ENCODE measurements at regions of chr12 and their contacts with region 1.

Region 1: GRCh38 chr12:47014474-47014873 is 64.9 kb upstream of the PCED1B start:
- DNase-seq: no peak
- H3K4me3 ChIP-seq: no peak overlapping the region
- H3K27ac ChIP-seq: no peak overlapping the region
- H3K4me1 ChIP-seq: no peaks in the 10 kb centered on the region
- H3K27me3 ChIP-seq: no peaks in the 10 kb centered on the region
- CTCF ChIP-seq: no peak
- EP300 ChIP-seq: no peak
- POLR2A ChIP-seq: no peak

Region 2: GRCh38 chr12:46071769-46072624 is 942.5 kb before region 1 on chr12:
- intact Hi-C with region 1: loop called (anchors 10 kb)
- DNase-seq: no peak
- H3K4me3 ChIP-seq: peak overlapping the region in 1 of 4 donors; percentile 6
- H3K27ac ChIP-seq: no peak overlapping the region
- H3K4me1 ChIP-seq: peaks cover 8 to 11% (median 10%) of the 10 kb centered on the region in 4 donors
- H3K27me3 ChIP-seq: no peaks in the 10 kb centered on the region
- CTCF ChIP-seq: peak; percentile 78 to 91 (median 90)
- EP300 ChIP-seq: no peak
- POLR2A ChIP-seq: no peak

Region 3: GRCh38 chr12:46499901-46500300 is 514.6 kb before region 1 on chr12:
- intact Hi-C with region 1: no loop called
- DNase-seq: no peak
- H3K4me3 ChIP-seq: no peak overlapping the region
- H3K27ac ChIP-seq: no peak overlapping the region
- H3K4me1 ChIP-seq: peaks cover 0 to 2% (median under 1%) of the 10 kb centered on the region in 4 donors
- H3K27me3 ChIP-seq: no peaks in the 10 kb centered on the region
- CTCF ChIP-seq: no peak
- EP300 ChIP-seq: no peak
- POLR2A ChIP-seq: no peak

Region 4: GRCh38 chr12:47071241-47071852 is 56.9 kb after region 1 on chr12:
- intact Hi-C with region 1: no loop called
- DNase-seq: no peak
- H3K4me3 ChIP-seq: no peak overlapping the region
- H3K27ac ChIP-seq: no peak overlapping the region
- H3K4me1 ChIP-seq: peaks cover 0 to 14% (median 5%) of the 10 kb centered on the region in 4 donors
- H3K27me3 ChIP-seq: no peaks in the 10 kb centered on the region
- CTCF ChIP-seq: peak in 1 of 3 experiments; percentile 31
- EP300 ChIP-seq: no peak
- POLR2A ChIP-seq: no peak